ENCODE measurements at regions of chr4 and their contacts with region 1.

Region 1: GRCh38 chr4:147674496-147674895 is 9.5 kb downstream of the PRMT9 start:
- DNase-seq: peak; percentile 77
- ATAC-seq: peak; percentile 87
- H3K4me3 ChIP-seq: no peak overlapping the region
- H3K27ac ChIP-seq: no peak overlapping the region
- H3K4me1 ChIP-seq: peaks cover 10% of the 10 kb centered on the region
- H3K27me3 ChIP-seq: no peaks in the 10 kb centered on the region
- CTCF ChIP-seq: no peak
- POLR2A ChIP-seq: no peak
- RAD21 ChIP-seq: no peak

Region 2: GRCh38 chr4:147617173-147617840 is 57.2 kb before region 1 on chr4 and contains the start of gene TMEM184C:
- CTCF ChIA-PET with region 1: no interaction called
- POLR2A ChIA-PET with region 1: no interaction called
- dilution Hi-C with region 1: no loop called
- in situ Hi-C with region 1: no loop called
- intact Hi-C with region 1: loop called (anchors 5 kb)
- DNase-seq: peak; percentile 93
- ATAC-seq: peak; percentile 99
- H3K4me3 ChIP-seq: peak within 1 kb of the TSS; percentile 90
- H3K27ac ChIP-seq: peak within 1 kb of the TSS; percentile 89
- H3K4me1 ChIP-seq: peaks cover 2% of the 10 kb centered on the region; the same call in 1 of the 2 replicates
- H3K27me3 ChIP-seq: no peaks in the 10 kb centered on the region
- CTCF ChIP-seq: no peak
- POLR2A ChIP-seq: peak; percentile 75
- RAD21 ChIP-seq: no peak; the same call in none of the 2 replicates
- total RNA-seq, gene TMEM184C: 67.6 and 71.7 TPM in 2 replicates

Measured in IMR-90 (cell line).